Left colon (tissue), 2 donors: ENCODE measurements at regions of chr20 and their contacts with region 1.

Region 1: GRCh38 chr20:63973636-63974402 is 4.1 kb upstream of the ZNF512B start:
- DNase-seq: peak; percentile 79 to 90
- ATAC-seq: peak; percentile 81

Region 2: DNA sequence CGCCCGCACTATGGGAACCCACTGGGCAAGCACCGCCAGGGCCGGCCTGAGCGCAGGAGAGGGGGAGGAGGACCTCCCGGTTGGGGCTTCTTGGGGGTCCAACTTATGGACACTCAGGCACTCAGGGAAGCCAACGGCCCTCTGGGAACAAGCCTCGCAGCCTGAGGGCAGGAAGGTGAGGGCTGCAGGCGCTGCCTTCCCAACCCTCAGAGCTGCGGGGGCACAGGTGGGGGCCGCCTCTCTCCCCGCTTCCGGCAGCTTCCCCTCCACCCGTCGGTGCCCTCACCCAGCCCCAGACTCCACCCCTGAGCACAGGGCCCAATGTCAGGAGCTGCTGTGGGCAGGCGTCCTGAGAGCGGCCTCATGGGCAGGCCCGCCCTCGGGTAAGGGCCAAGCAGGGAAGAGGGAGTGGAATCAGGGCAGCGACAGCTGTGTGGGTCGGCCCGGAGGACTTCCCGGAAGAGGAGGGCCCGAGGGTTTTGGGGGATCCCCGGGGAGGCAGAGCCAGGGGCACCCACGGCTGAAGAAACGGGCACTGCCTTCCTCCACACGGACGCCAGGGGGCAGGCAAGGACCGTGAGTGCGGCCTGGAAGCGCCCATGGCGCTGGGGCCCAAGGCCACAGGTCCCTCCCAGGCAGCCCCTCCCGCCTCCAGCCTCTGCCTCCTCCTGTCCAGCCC is 436.2 kb before region 1 on chr20:
- intact Hi-C with region 1: loop called (anchors 5 to 10 kb)
- DNase-seq: peak; percentile 94 to 98
- ATAC-seq: peak; percentile 59

Region 3: GRCh38 chr20:63908008-63908624 is 65.7 kb before region 1 on chr20:
- intact Hi-C with region 1: loop called in 1 of 2 experiments (anchors 10 kb)
- DNase-seq: peak; percentile 73 to 80
- ATAC-seq: peak; percentile 85

Region 4: GRCh38 chr20:64091770-64092169 is 118.0 kb after region 1 on chr20:
- intact Hi-C with region 1: no loop called
- DNase-seq: no peak
- ATAC-seq: no peak